ENCODE measurements at regions of chr11 and their contacts with region 1.

Region 1: DNA sequence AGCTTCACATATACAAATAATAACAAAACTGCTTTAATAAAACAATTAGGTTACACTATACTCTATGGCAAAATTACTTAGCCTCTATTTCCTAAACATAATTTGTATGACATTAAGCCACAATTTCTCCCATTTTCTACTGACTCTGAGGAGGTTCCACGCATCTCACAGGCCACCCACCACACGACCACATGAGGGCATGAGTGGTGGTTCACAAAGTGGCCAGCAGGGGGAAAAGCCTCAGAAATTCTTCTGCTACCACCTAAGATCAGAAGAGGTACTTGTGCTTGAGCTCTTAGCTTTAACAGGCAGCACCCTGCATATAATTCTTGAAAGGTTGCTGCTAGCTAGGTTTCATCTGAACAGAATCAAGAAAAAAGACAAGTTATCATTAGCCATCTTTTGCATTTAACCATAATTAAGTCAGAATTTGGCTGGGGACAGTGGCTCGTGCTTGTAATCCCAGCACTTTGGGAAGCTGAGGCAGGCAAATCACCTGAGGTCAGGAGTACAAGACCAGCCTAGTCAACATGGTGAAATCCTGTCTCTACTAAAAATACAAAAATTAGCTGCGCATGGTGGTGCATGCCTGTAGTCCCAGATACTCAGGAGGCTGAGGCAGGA is 7.7 kb downstream of the LPXN start:
- DNase-seq: peak; percentile 29 to 80
- H3K4me3 ChIP-seq: no peak overlapping the region
- H3K27ac ChIP-seq: no peak overlapping the region
- H3K4me1 ChIP-seq: no peaks in the 10 kb centered on the region
- H3K27me3 ChIP-seq: no peaks in the 10 kb centered on the region
- CTCF ChIP-seq: peak; percentile 74 to 92 (median 84)
- EP300 ChIP-seq: no peak
- POLR2A ChIP-seq: no peak
- RAD21 ChIP-seq: peak; percentile 41 to 52

Region 2: GRCh38 chr11:58513747-58514367 is 54.1 kb before region 1 on chr11:
- CTCF ChIA-PET with region 1: no interaction called
- POLR2A ChIA-PET with region 1: no interaction called
- DNase-seq: peak; percentile 54 to 74
- H3K4me3 ChIP-seq: no peak overlapping the region
- H3K27ac ChIP-seq: no peak overlapping the region
- H3K4me1 ChIP-seq: no peaks in the 10 kb centered on the region
- H3K27me3 ChIP-seq: no peaks in the 10 kb centered on the region
- CTCF ChIP-seq: peak; percentile 40 to 77 (median 76)
- EP300 ChIP-seq: no peak
- POLR2A ChIP-seq: no peak
- RAD21 ChIP-seq: peak; percentile 96 to 97

Region 3: DNA sequence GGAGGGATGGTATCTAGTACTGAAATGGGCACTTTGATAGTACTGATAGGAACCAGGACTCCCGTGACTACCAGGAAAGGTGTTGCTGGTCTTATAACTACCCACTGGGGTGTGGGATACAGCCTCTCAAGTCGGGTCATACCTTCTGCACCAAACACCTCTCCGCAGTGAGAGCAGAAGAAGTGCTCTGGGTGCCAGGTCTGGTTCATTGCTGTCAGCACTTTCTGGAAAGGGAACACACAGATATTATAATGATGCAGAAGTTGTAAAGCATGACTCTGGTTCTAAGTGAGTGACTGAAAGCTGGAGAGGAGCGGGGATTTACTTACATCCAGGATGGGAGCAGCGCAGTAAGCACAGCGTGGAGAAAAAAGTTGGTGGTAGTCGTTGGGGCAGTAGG is 18.4 kb before region 1 on chr11:
- CTCF ChIA-PET with region 1: interaction called, 19 read pairs
- POLR2A ChIA-PET with region 1: no interaction called
- DNase-seq: no peak
- H3K4me3 ChIP-seq: no peak overlapping the region
- H3K27ac ChIP-seq: no peak overlapping the region
- H3K4me1 ChIP-seq: no peaks in the 10 kb centered on the region
- H3K27me3 ChIP-seq: no peaks in the 10 kb centered on the region
- CTCF ChIP-seq: no peak
- EP300 ChIP-seq: no peak
- POLR2A ChIP-seq: no peak
- RAD21 ChIP-seq: no peak

Region 4: DNA sequence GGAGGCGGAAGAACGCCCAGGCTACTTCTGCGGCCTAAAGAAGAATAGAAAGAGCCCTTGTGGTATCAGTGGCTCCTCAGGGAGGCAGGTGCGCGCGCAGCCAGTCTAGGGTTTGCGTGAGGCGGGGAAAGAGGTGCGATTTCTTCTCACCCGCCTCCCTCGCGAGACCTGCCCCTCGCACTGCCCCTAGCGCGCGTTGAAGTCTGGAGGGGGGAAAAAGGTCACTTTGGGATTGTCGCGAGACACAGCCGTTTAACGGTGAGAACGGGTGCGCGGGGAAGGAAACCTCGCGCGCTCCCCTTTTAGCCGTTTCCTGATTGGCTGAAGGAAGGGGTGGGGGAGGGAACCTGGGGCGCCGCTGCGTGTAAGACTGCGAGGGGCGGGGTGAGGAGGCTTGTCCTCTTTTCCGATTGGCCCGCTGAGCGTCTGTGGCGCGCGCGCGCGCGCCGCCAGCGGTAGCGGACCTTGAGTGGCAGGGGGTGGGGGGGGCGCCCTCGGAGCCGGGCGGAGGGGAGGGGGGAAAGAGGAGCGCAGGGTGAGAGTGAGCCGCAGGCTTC is 10.7 kb after region 1 on chr11 and contains the start of gene ZFP91:
- CTCF ChIA-PET with region 1: interaction called, 26 read pairs
- POLR2A ChIA-PET with region 1: interaction called, 13 read pairs
- DNase-seq: peak; percentile 87 to 89
- H3K4me3 ChIP-seq: peak within 1 kb of the TSS; percentile 96 to 100 (median 98)
- H3K27ac ChIP-seq: peak within 1 kb of the TSS; percentile 100
- H3K4me1 ChIP-seq: peaks cover 0 to 2% (median 2%) of the 10 kb centered on the region in 4 experiments; a peak in 4 of 7 replicates
- H3K27me3 ChIP-seq: no peaks in the 10 kb centered on the region
- CTCF ChIP-seq: no peak
- EP300 ChIP-seq: no peak
- POLR2A ChIP-seq: peak in 1 of 2 experiments; percentile 74; a peak in 2 of 3 replicates
- RAD21 ChIP-seq: no peak
- total RNA-seq, gene ZFP91: 29.0 and 29.5 TPM in 2 replicates